HEK293 (cell line): ENCODE measurements at regions of chr1 and their contacts with region 1.

Region 1: GRCh38 chr1:201850053-201850397 is 21.1 kb downstream of the IPO9 start:
- H3K4me3 ChIP-seq: no peak overlapping the region
- H3K27ac ChIP-seq: no peak overlapping the region
- H3K4me1 ChIP-seq: peaks cover 5% of the 10 kb centered on the region; the same call in 1 of the 2 replicates
- CTCF ChIP-seq: no peak

Region 2: DNA sequence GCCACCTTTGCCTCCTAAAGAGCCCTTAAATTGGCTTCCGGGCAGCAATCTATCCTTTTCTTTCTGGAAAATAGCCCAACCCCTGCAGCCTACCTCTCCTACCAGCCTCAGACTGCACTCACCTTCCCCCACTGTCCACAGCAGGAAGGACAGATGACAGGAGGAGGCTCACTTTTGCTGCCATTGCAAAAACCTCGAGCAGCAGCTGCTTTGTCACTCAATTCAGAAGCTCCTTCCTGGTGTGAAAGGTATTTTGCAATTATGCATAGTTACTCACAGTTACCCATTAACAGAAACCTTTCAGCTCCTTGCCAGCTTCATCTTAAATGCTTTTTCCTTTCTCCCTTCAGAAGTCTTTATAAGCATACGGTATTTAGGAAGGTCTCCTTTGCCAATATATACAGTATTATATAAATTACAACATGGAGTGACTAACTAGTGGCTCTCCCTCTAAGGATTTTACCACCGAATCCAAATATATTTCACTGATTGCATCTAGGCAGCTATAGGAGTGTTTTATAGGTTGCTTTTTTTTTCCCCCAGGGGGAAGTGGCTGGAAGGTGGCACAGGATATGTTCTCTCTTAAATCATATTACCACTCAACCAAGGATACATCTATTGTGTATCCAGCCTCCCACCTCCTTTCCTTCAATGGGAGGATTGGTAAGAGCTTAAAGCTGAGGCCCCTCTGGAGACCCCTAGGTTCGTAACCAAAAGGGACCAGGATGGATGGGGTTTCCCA is 163.1 kb before region 1 on chr1:
- CTCF ChIA-PET with region 1: no interaction called
- POLR2A ChIA-PET with region 1: no interaction called
- H3K4me3 ChIP-seq: no peak overlapping the region
- H3K27ac ChIP-seq: no peak overlapping the region
- H3K4me1 ChIP-seq: peaks cover 10% of the 10 kb centered on the region
- CTCF ChIP-seq: no peak

Region 3: GRCh38 chr1:201828820-201829774 is 20.9 kb before region 1 on chr1 and contains the start of gene IPO9:
- CTCF ChIA-PET with region 1: interaction called, 36 read pairs
- POLR2A ChIA-PET with region 1: interaction called, 8 read pairs
- H3K4me3 ChIP-seq: peak within 1 kb of the TSS; percentile 98
- H3K27ac ChIP-seq: peak within 1 kb of the TSS; percentile 96
- H3K4me1 ChIP-seq: 0 out of 2 replicates have a peak, but pooled peaks cover 3% of the 10 kb centered on the region
- CTCF ChIP-seq: peak; percentile 82

Region 4: DNA sequence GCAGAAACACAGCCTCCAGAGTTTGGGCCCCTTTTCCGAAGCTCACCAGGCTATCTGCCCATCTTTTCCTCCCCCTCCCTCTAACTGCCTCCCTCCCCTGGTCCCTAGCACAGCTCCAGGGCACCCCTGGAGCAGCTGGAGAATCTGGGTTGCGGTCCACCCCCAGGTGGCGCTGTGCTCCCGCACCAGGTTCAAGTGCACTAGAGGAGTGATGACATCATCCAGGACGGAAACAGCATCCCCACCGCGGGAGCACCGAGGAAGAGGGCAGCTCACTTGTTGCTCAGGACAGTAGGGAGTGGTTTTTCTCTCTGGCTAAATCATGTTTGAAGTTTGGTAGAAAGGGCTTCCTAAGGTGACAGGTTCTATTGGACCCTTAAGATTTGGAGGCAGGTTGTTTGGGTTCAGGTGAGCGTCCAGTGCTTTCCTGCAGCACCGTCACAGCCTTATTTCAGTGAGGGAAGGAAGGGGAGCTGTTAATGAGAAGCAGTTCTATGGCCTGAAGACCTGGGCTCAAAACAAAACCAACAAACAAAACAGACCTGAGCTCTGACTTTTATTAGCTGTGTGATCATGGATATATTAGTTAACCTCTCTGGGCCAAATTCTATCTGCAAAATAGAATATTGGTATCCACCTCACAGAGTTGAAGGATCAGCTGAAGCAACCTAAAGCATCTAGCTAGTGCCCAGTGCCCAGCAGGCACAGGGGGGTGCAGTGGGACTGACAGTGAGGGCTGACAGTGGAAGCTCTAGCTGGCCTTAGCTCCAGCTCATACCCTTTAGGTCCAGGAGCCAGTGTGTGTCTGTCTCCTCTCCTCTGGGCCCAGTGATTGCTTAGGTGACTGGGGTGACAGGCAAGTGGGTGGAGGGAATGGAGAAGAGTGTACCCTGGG is 46.1 kb after region 1 on chr1:
- CTCF ChIA-PET with region 1: no interaction called
- POLR2A ChIA-PET with region 1: no interaction called
- H3K4me3 ChIP-seq: no peak overlapping the region
- H3K27ac ChIP-seq: no peak overlapping the region
- H3K4me1 ChIP-seq: no peaks in the 10 kb centered on the region
- CTCF ChIP-seq: peak; percentile 97